ENCODE measurements at regions of chr20 and their contacts with region 1.

Region 1: GRCh38 chr20:36153736-36154699 is 522 bp upstream of the EPB41L1 start:
- DNase-seq: no peak
- H3K4me3 ChIP-seq: peak overlapping the region; percentile 68
- H3K27me3 ChIP-seq: no peaks in the 10 kb centered on the region
- CTCF ChIP-seq: no peak

Region 2: GRCh38 chr20:36050436-36051317 is 103.3 kb before region 1 on chr20:
- CTCF ChIA-PET with region 1: no interaction called
- POLR2A ChIA-PET with region 1: no interaction called
- DNase-seq: peak; percentile 19
- H3K4me3 ChIP-seq: peak overlapping the region; percentile 70
- H3K27me3 ChIP-seq: peaks cover 4% of the 10 kb centered on the region; the same call in 1 of the 2 replicates
- CTCF ChIP-seq: no peak

Region 3: GRCh38 chr20:36167826-36168531 is 14.0 kb after region 1 on chr20:
- CTCF ChIA-PET with region 1: interaction called, 10 read pairs
- POLR2A ChIA-PET with region 1: no interaction called
- DNase-seq: no peak
- H3K4me3 ChIP-seq: no peak overlapping the region
- H3K27me3 ChIP-seq: no peaks in the 10 kb centered on the region
- CTCF ChIP-seq: no peak

Region 4: DNA sequence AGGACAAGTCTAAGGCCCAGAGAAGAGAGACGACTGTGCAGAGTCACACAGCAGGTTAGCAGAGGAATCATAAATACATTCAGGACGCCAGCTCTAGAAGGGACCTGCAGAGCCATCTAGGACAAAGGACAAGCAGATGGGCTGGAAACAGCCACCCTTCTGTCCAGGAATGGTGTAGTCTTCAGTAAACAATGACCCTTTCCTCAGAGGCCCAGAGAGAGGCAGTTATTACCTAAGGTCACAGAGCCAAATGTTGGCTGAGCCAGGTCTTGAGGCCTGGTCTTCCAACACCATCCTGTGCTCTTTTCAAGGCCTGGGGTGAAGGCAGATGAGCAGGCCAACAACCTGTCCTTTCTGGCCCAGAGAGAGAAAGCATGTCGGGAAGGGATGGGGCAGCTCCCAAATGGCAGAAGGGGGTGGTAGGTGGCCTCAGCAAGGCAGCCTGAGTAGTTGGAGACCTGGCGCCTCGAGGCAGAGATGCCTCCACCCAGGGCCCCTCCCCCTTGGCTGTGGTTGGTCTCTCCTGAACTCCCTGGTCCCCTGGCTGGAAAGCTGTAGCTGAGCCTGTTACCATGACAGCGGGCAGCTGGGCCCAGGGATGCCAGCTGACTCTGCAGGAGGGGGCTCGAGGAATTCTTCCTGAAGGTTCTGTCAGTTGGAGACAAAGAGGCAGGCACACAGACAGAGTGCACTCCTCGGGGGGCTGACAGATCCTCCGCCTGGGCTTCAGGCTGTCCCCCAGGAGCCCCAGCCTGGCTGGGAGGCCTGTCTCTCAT is 25.3 kb after region 1 on chr20:
- CTCF ChIA-PET with region 1: interaction called, 11 read pairs
- POLR2A ChIA-PET with region 1: no interaction called
- DNase-seq: no peak
- H3K4me3 ChIP-seq: no peak overlapping the region
- H3K27me3 ChIP-seq: no peaks in the 10 kb centered on the region
- CTCF ChIP-seq: no peak

Region 5: DNA sequence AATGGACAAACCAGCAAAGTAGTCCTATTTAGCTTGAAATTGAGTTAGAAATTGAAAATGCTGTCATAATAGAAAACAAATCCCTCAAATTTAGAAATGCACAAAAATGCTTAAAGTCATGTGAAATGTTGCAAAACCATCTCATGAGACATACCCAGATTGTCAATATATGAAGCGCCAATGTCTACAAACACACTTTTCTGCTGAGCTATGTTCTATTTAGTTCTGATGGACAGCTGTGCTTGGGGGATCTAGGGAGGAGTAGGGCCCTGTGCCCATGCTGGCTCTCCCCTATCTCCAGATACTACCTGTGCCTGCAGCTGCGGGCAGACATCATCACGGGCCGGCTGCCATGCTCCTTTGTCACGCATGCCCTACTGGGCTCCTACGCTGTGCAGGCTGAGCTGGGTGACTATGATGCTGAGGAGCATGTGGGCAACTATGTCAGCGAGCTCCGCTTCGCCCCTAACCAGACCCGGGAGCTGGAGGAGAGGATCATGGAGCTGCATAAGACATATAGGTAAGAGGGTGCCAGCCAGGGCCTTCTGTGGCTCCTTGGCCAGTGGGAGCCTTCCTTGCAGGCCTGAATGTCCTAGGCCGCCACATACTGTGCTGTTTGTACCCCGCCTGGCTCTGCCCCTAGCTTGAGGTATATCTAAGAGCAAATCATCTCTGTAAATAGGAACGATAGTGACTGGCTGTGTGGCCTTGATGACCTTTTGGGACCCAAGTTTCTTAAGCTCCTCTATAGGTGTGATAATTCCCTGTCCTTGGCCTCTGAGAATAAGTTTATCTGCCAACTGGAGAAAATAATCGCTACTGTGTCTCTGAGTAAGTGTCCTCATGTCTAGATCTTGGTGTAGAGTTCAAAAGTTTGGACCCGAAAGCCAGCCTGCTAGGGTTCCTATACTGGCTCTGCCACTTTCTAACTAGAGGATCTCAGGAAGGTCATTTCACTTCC is 31.1 kb after region 1 on chr20:
- CTCF ChIA-PET with region 1: interaction called, 11 read pairs
- POLR2A ChIA-PET with region 1: no interaction called
- DNase-seq: no peak
- H3K4me3 ChIP-seq: no peak overlapping the region
- H3K27me3 ChIP-seq: no peaks in the 10 kb centered on the region
- CTCF ChIP-seq: no peak

Region 6: GRCh38 chr20:36193977-36194712 is 40.1 kb after region 1 on chr20:
- CTCF ChIA-PET with region 1: interaction called, 84 read pairs
- POLR2A ChIA-PET with region 1: no interaction called
- DNase-seq: no peak
- H3K4me3 ChIP-seq: no peak overlapping the region
- H3K27me3 ChIP-seq: no peaks in the 10 kb centered on the region
- CTCF ChIP-seq: no peak

Region 7: GRCh38 chr20:36199345-36200257 is 45.6 kb after region 1 on chr20:
- CTCF ChIA-PET with region 1: interaction called, 84 read pairs
- POLR2A ChIA-PET with region 1: no interaction called
- DNase-seq: peak; percentile 14
- H3K4me3 ChIP-seq: no peak overlapping the region
- H3K27me3 ChIP-seq: no peaks in the 10 kb centered on the region
- CTCF ChIP-seq: peak; percentile 97